Left cardiac atrium (tissue), 4 donors: ENCODE measurements at regions of chr1 and their contacts with region 1.

Region 1: DNA sequence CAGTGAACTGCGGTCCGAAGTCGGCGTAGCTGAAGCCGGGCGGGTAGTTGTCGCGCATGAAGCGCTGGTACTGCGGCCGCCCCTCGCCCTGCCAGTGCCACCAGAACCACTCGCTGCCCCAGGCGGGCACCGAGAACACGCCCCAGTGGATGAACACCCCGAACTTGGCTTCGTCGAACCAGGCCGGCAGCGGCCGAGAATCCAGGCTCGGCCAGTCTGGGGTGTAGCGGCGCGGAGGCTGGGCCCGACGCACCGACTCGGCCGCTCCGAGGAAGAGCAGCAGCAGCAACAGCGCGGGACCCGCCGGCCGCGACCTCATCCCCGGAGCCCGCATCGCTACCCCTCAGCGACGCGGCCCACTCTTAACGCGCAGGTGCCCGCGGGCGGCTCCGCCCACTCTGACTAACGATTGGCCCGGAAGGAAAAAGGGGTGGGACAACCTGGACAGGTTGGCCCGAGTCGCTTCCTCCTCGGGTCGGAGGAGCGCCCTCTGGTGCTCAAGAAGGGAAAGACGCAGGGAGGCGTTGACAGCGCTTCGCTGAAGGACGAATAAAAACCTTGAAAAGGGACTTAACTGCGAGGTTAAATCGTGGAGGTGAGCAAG is at the start of gene FUCA1:
- DNase-seq: peak; percentile 92
- ATAC-seq: peak; percentile 99
- total RNA-seq, gene FUCA1: 17.0 to 19.9 TPM

Region 2: DNA sequence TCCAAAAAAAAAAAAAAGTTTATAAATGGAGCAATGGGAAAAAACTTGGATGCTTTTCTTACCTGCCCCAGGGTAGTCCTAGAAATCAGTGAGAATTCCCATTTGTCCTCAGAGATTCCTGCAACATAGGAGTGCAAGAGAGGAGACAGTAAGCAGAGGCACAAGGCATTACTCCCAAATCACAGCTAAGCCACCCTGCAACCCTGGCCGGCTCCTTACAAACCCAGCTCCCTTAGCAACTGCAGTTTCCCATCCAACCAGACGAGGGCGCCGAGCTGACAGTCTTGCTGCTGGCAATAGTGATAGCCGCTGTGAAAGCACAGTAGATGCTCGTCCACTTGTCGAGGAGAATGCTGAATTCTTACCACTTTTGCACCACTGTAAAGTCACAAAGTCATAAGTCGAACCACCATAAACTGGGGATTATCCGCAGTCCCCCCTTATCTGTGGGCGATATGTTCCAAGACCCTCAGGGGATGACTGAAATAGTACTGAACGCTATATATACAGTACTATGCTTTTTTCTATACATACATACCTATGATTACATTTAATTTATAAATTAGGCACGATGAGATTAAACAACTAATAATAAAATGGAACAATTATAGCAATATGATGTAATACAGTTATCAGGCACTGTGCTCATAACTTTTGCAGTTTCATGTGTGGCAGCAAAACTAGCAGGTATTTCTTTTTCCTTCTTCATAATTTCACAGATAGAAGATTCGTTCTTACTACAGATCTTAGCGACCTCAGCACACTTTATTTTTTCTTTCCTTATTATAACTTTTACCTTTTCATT is 95.8 kb before region 1 on chr1:
- intact Hi-C with region 1: loop called in 1 of 2 experiments (anchors 5 kb)
- DNase-seq: peak; percentile 88
- ATAC-seq: peak; percentile 86 to 88

Region 3: DNA sequence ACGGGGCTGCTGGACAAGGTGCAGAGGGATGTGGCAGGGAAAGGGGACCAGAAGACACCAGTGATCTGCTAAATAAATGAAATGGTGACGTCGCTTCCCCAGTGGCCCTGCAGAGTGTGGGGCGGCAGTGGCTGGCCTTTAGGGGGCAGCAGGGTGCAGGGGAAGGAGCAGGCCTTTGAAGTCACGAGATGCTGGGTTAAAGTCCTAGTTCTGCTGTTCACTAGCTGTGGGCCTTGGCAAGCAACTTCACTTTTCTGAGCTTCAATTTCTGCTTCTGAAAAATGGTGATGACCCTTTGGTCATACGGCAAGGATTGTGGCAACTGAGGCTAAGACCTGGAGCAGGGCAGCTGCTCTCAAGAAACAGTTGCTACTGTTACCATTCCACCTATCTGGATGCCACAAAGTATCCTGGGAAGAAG is 58.3 kb before region 1 on chr1:
- intact Hi-C with region 1: loop called in 1 of 2 experiments (anchors 5 kb)
- DNase-seq: peak; percentile 69
- ATAC-seq: peak; percentile 86 to 88

Region 4: DNA sequence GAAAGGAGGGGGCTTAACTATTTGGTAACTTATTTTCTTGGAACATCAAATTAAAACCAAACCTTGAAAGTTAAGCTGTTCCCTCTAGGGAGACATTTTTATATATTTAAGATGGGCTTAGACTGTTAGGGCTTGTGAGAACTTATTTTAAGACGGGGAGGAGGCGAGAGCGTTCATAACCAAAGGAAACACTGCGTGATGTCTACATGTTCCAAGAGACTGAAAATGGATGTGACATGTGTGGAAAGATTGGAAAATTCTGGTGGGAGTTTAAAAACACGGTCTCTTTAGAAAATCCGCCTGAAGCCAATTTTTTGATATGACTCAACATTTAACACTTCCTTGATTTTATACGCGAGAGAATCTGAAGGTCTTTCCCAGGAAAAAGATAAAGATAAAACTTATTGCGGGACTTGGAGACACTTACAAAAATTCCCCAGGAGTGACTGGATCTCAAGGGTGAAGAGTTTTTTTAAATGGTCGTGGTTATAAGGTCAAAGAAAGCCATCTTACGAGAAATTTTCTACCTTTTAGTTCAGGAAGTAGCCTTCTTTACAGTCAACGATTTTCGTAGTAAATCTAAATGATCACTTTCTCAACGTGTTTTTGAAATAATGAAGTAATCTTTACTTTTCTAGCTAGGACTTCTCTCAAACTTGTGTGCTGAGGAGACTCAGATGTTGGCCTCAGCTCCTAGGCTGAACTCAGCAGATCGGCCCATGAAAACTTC is 92.4 kb after region 1 on chr1:
- intact Hi-C with region 1: no loop called
- DNase-seq: no peak
- ATAC-seq: peak; percentile 1 to 9